ENCODE measurements at regions of chr21 and their contacts with region 1.

Region 1: GRCh38 chr21:31526040-31526439 is 133.5 kb upstream of the SOD1 start:
- DNase-seq: no peak
- ATAC-seq: no peak
- H3K4me3 ChIP-seq: no peak overlapping the region
- H3K27ac ChIP-seq: no peak overlapping the region
- H3K4me1 ChIP-seq: no peaks in the 10 kb centered on the region
- H3K27me3 ChIP-seq: no peaks in the 10 kb centered on the region
- CTCF ChIP-seq: no peak

Region 2: DNA sequence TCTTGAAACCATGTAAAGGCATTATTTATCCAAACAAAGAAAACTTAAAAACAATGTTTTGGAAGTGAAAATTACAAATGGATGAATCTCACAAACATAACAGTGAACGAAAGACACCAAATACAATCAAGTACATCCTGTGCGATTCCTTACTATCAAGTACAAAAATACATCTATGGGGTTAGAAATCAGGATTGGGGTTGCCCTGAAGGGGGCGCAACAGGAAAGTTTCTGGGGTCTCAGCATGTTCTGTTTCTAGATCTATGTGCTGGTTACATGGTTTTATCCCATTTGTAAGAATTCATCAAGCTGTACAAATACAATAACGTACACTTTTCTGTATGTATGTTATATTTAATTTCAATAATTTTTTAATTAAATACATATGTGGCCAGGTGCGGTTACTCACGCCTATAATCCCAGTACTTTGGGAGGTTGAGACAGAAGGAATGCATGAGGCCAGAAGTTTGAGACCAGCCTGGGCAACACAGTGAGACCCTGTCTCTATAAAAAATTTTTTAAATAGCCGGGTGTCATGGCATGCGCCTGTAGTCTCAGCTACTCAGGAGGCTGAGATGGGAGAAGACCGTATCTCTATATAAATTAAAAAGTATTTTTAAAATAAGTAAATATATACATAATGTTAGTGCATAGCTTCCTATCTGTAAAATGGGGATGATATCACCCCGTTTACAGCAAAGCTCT is 12.0 kb after region 1 on chr21:
- CTCF ChIA-PET with region 1: no interaction called
- POLR2A ChIA-PET with region 1: interaction called, 12 read pairs
- in situ Hi-C with region 1: no loop called
- intact Hi-C with region 1: no loop called
- DNase-seq: no peak
- ATAC-seq: no peak
- H3K4me3 ChIP-seq: no peak overlapping the region
- H3K27ac ChIP-seq: no peak overlapping the region
- H3K4me1 ChIP-seq: no peaks in the 10 kb centered on the region
- H3K27me3 ChIP-seq: no peaks in the 10 kb centered on the region
- CTCF ChIP-seq: no peak

Region 3: DNA sequence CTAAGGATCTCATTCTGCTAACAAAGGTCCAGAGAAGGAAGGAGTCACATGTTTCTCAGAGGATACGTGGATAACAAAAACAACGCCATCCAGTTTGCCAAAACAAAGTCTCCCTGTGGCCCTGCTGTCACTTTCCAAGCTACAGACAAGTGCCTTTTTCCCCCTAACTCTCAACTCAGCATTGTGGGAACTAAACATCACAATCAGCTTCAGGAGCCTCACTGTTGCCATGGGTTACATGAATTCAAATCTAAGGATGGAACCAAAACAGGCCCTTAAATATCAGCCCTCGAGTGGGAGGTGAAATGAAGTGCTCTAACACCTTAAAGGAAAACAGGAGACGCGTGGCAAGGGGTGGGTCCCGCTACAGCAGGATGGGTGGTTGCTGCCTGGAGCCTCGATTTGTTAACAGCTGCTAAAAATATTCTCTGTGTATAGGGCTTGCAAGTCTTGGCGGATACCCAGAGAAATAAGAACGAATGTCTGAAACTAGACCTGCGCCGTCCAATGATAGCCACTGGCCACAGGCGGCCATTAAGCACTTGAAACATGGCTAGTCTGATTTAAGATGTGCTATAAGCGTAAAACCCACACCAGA is 67.0 kb after region 1 on chr21:
- CTCF ChIA-PET with region 1: no interaction called
- POLR2A ChIA-PET with region 1: no interaction called
- in situ Hi-C with region 1: no loop called
- intact Hi-C with region 1: no loop called
- DNase-seq: no peak
- ATAC-seq: no peak
- H3K4me3 ChIP-seq: no peak overlapping the region
- H3K27ac ChIP-seq: no peak overlapping the region
- H3K4me1 ChIP-seq: no peaks in the 10 kb centered on the region
- H3K27me3 ChIP-seq: no peaks in the 10 kb centered on the region
- CTCF ChIP-seq: no peak